ENCODE measurements at regions of chr15 and their contacts with region 1.

Region 1: GRCh38 chr15:43285609-43286037 is 18.9 kb upstream of the TGM5 start:
- DNase-seq: peak; percentile 36
- H3K4me3 ChIP-seq: no peak overlapping the region
- H3K27ac ChIP-seq: no peak overlapping the region
- H3K27me3 ChIP-seq: peaks cover 14% of the 10 kb centered on the region
- CTCF ChIP-seq: peak; percentile 86

Region 2: DNA sequence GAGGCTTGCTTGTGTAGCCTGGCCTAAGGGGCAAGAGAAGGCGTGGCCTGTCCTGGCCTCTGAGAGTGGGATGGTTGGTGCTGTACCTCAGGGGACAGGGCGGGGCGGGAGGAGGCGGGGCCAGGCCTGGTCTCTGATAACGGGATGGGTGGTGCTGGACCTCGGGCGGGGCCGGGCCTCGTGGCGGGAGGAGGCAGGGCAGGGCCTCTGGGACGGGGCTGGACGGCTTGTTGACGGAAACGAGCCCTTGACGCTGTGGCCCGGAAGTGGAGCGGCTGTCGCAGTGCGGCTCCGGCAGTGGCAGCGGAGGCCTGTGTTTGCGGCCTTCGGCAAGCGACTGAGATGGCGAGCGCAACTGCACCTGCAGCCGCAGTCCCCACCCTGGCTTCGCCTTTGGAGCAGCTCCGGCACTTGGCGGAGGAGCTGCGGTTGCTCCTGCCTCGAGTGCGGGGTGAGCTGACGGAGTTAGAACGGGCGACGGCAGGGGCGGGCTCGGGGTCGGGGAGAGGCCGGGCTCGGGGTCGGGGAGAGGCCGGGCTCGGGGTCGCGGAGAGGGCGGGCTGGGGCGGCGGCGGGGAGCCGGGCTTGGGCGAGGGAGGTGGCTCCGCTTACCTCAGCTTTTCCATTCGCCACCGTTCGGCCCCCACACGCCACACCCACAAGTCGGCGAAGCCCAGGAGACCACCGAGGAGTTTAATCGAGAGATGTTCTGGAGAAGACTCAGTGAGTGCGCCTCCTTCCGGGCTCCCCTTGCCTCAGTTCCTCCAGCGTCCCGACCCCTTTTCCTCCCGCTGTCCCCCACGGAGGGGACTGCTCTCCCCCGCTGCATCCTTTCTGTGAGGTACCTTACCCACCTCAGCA is 100.2 kb before region 1 on chr15 and contains the start of gene CCNDBP1:
- CTCF ChIA-PET with region 1: interaction called, 28 read pairs
- POLR2A ChIA-PET with region 1: interaction called, 4 read pairs
- DNase-seq: no peak
- H3K4me3 ChIP-seq: peak within 1 kb of the TSS; percentile 80
- H3K27ac ChIP-seq: no peak within 1 kb of the TSS
- H3K27me3 ChIP-seq: no peaks in the 10 kb centered on the region
- CTCF ChIP-seq: peak; percentile 47
- polyA plus RNA-seq, gene CCNDBP1: 43.3 and 54.2 TPM in 2 replicates

Region 3: GRCh38 chr15:43194795-43195194 is 90.8 kb before region 1 on chr15:
- CTCF ChIA-PET with region 1: interaction called, 21 read pairs
- POLR2A ChIA-PET with region 1: no interaction called
- DNase-seq: no peak
- H3K4me3 ChIP-seq: no peak overlapping the region
- H3K27ac ChIP-seq: no peak overlapping the region
- H3K27me3 ChIP-seq: no peaks in the 10 kb centered on the region
- CTCF ChIP-seq: no peak

Region 4: DNA sequence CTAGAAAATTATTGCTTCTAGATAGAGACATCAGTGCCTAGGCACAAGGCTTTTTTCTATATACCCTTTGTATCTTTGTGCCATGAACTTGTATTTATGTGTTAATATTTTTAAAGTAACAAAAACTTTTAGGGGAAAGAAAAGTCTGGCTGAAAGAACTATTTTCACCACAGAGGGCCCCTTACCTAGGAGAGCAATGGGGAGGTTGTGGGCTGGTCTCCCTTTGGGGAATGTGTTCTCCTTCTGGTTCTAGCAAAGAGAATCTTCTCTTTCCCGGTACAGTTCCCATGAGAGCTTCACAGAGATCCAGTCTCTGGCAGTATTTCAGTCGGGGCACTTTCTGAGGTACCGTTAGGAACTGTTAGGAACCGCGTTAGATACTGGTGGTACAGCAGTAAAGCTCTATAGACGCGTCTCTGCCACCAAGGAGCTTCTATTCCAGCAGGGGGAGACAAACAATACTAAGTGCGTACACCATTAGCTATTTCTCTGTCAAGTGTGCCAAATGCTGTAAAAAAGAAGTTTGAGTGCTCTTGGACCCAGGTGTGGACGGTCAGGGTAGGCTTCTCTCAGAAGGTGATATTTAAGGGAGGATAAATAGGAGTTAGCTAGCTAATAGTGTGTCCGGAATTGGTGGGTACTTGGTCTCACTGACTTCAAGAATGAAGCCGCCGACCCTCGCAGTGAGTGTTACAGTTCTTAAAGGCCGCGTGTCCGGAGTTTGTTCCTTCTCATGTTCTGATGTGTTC is 60.2 kb before region 1 on chr15:
- CTCF ChIA-PET with region 1: interaction called, 160 read pairs
- POLR2A ChIA-PET with region 1: interaction called, 4 read pairs
- DNase-seq: peak; percentile 11
- H3K4me3 ChIP-seq: no peak overlapping the region
- H3K27ac ChIP-seq: no peak overlapping the region
- H3K27me3 ChIP-seq: peaks cover 15% of the 10 kb centered on the region
- CTCF ChIP-seq: peak; percentile 83

Region 5: DNA sequence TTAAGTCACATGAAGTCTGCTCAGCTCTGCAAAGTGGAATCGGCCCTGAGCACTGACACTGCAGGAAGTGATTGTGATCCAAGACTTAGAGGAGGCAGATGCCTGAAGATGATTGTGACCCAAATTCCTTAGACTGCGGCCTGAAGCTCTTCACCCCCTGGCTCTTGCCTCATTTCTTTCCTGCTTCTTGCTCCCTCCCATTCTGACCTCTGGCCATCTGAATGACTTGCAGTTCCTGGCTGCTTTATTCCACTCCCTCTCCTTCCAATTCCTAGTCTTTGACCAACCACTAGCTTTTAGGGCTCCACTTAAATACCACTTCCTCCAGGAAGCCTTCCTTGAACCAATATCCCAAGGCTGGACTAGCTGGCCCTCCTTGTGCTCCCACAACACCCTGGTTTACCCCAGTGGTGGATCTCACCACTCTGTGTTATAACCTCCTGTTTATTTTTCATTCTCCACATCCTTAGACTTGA is 54.9 kb before region 1 on chr15:
- CTCF ChIA-PET with region 1: interaction called, 160 read pairs
- POLR2A ChIA-PET with region 1: interaction called, 4 read pairs
- DNase-seq: no peak
- H3K4me3 ChIP-seq: no peak overlapping the region
- H3K27ac ChIP-seq: no peak overlapping the region
- H3K27me3 ChIP-seq: peaks cover 33% of the 10 kb centered on the region
- CTCF ChIP-seq: no peak

Region 6: GRCh38 chr15:43302205-43302817 is 16.7 kb after region 1 on chr15:
- CTCF ChIA-PET with region 1: interaction called, 15 read pairs
- POLR2A ChIA-PET with region 1: no interaction called
- DNase-seq: no peak
- H3K4me3 ChIP-seq: no peak within 1 kb of the TSS
- H3K27ac ChIP-seq: no peak within 1 kb of the TSS
- H3K27me3 ChIP-seq: peaks cover 32% of the 10 kb centered on the region
- CTCF ChIP-seq: no peak

Measured in AG04450 (cell line).